ENCODE measurements at regions of chr22 and their contacts with region 1.

Region 1: GRCh38 chr22:22349455-22349836 is 104.9 kb downstream of the VPREB1 start:
- DNase-seq: no peak
- H3K4me3 Mint-ChIP-seq: no peak overlapping the region
- H3K27ac Mint-ChIP-seq: no peak overlapping the region
- H3K4me1 Mint-ChIP-seq: no peaks in the 10 kb centered on the region
- H3K27me3 Mint-ChIP-seq: peaks cover 32% of the 10 kb centered on the region

Region 2: DNA sequence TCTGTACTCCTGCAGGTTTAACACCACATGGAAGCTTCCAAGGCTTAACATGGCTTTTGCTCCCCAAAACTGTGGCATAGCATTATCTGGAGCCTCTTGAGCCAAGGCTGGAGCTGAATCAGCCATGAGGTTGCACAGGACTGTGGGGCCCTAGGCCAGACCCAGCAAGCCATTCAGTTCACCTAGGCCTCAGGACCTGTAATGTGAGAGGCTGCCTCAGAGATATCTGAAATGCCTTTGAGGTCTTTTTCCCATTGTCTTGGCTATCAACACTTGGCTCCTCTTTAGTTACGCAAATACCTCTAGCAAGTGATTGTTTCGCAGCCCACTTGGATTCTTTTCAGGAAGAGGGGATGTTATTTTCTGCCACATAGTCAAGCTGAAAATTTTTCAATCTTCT is 32.9 kb before region 1 on chr22:
- intact Hi-C with region 1: no loop called
- DNase-seq: no peak
- H3K4me3 Mint-ChIP-seq: no peak overlapping the region
- H3K27ac Mint-ChIP-seq: no peak overlapping the region
- H3K4me1 Mint-ChIP-seq: no peaks in the 10 kb centered on the region
- H3K27me3 Mint-ChIP-seq: no peaks in the 10 kb centered on the region

Region 3: GRCh38 chr22:22375576-22376423 is 26.4 kb after region 1 on chr22:
- intact Hi-C with region 1: loop called (anchors 1 kb)
- DNase-seq: no peak
- H3K4me3 Mint-ChIP-seq: no peak overlapping the region
- H3K27ac Mint-ChIP-seq: no peak overlapping the region
- H3K4me1 Mint-ChIP-seq: no peaks in the 10 kb centered on the region
- H3K27me3 Mint-ChIP-seq: peaks cover 36% of the 10 kb centered on the region

Region 4: GRCh38 chr22:22397277-22397870 is 47.9 kb after region 1 on chr22:
- intact Hi-C with region 1: loop called (anchors 1 kb)
- DNase-seq: no peak
- H3K4me3 Mint-ChIP-seq: no peak overlapping the region
- H3K27ac Mint-ChIP-seq: no peak overlapping the region
- H3K4me1 Mint-ChIP-seq: no peaks in the 10 kb centered on the region
- H3K27me3 Mint-ChIP-seq: peaks cover 14% of the 10 kb centered on the region

Region 5: DNA sequence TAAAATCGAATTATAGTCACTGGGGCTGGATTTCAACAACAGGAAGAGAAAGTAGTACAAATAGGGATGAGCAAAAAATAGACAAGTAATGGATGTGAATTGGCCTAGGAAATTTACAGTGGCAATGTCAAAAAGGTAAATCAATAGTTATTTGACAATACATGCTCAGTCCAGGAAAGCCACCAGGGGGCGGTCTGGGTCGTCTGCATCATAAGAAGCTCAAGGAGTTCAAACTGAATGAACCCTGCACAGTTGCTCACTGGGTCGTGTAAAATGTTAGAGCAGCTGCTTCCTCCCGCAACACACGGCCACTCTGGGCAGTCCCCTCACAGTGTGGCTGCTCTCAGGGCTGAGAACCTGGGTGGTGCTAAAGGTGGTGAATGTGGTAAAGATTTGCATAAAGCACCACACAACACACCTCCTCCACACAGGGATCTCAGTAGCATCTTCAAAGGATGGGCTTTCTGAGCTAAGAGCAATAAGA is 73.2 kb after region 1 on chr22:
- intact Hi-C with region 1: no loop called
- DNase-seq: peak; percentile 43
- H3K4me3 Mint-ChIP-seq: no peak overlapping the region
- H3K27ac Mint-ChIP-seq: no peak overlapping the region
- H3K4me1 Mint-ChIP-seq: no peaks in the 10 kb centered on the region
- H3K27me3 Mint-ChIP-seq: peaks cover 13% of the 10 kb centered on the region

Region 6: GRCh38 chr22:22593964-22594656 is 244.7 kb after region 1 on chr22:
- intact Hi-C with region 1: no loop called
- DNase-seq: peak; percentile 38
- H3K4me3 Mint-ChIP-seq: no peak overlapping the region
- H3K27ac Mint-ChIP-seq: no peak overlapping the region
- H3K4me1 Mint-ChIP-seq: peaks cover 4% of the 10 kb centered on the region
- H3K27me3 Mint-ChIP-seq: peaks cover 3% of the 10 kb centered on the region

Measured in activated T-helper 2 cell treated with anti-CD3 and anti-CD28 coated beads, Interferon-gamma antibody, Interleukin-2, Interleukin-4, amounts not matched to agents 10 μg/mL and 5 μg/mL and 100 μg/mL, durations not matched to agents 14 hours and 24 hours and 36 hours (primary cell).